CD8-positive, alpha-beta memory T cell (primary cell): ENCODE measurements at regions of chr5 and their contacts with region 1.

Region 1: DNA sequence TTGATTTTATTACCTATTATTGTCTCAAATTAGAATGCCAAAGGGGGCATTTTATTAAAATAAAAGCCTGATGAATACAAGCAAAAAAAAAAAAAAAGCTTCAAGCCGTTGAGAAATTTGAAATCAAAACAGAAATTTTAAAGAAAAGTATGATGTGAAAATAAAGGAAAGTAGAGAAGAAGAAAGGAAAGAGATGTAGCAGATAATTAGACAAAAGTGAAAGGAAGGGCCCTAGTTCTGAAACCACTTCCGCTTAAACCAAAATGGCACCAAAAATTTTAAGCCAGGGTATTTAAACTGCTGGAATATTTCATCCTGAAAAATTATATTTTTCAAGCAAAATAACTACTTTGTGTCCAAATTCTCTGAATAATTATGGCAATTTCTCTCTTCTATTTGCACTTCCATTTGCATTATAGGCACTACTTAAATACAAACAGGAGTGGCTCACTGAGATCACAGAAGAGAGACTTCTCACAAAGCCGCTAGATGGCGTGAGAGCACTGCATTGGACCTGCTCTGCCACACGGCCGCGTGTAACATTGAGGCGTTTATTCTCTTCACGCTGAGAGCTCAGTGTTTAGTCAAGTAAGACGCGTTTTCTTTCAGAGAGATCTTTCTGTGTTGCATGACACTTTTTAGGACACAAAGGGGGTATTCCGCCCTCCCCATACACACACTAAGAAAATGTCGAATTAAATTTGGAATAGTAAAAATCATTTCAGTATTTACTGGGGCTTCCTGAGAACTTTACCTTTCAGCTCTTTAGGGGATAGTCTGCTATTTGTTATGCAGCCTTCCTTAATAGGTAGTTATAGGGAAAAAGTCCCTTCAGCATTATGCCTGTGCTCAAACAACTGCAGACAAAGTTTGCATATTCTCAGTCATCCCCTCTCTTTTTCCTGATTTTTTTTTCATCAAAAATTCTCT is 368.4 kb upstream of the CCNH start:
- DNase-seq: peak; percentile 62 to 83 (median 66)
- H3K4me3 ChIP-seq: no peak overlapping the region
- H3K4me3 Mint-ChIP-seq: no peak overlapping the region
- H3K27ac ChIP-seq: no peak overlapping the region
- H3K27ac Mint-ChIP-seq: no peak overlapping the region
- H3K4me1 ChIP-seq: no peaks in the 10 kb centered on the region
- H3K4me1 Mint-ChIP-seq: peaks cover 2 to 4% (median 3%) of the 10 kb centered on the region in 3 donors
- H3K27me3 ChIP-seq: peaks cover 6% of the 10 kb centered on the region
- H3K27me3 Mint-ChIP-seq: peaks cover 11 to 41% of the 10 kb centered on the region in 2 donors

Region 2: DNA sequence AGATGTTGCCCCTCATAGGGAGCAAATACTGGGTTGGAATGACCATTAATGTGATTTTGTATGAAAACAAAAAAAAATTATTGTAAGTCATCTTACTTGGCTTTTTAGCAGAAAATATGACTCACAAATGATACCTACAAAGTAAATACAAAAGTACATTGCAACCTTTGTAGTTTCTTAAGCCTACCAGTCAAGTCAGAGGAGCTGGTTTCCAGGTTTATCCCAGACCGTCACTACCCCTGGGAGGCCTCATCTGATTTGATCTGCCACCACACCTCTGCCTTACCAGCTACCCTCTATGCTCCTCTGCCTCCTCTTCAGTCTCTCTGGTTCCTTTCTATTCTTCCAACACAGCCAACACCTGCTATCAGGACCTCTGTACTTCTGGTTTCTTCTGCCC is 18.5 kb before region 1 on chr5:
- CTCF ChIA-PET with region 1: no interaction called
- POLR2A ChIA-PET with region 1: no interaction called
- DNase-seq: no peak
- H3K4me3 ChIP-seq: no peak overlapping the region
- H3K4me3 Mint-ChIP-seq: no peak overlapping the region
- H3K27ac ChIP-seq: no peak overlapping the region
- H3K27ac Mint-ChIP-seq: no peak overlapping the region
- H3K4me1 ChIP-seq: no peaks in the 10 kb centered on the region
- H3K4me1 Mint-ChIP-seq: no peaks in the 10 kb centered on the region
- H3K27me3 ChIP-seq: no peaks in the 10 kb centered on the region
- H3K27me3 Mint-ChIP-seq: peaks cover 2 to 6% of the 10 kb centered on the region in 2 donors

Region 3: DNA sequence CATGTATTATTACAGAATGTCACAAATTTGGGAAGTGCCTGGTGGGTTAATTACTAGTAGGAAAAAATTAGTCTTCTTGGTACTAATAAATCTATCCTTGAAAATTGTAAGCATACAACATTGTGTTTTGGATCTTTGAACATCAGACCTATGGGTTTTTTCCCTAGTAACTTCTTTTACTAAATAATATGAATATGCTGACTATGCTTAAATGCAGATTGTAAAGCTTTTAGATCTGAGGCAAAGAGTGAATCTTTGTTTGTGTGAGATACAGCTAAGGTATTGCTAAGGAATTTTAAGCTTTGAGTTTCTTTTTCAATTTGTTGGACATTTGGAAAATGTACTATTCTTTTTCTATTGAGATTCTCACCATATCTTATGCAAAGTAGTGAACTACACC is 22.3 kb after region 1 on chr5:
- CTCF ChIA-PET with region 1: no interaction called
- POLR2A ChIA-PET with region 1: no interaction called
- DNase-seq: no peak
- H3K4me3 ChIP-seq: no peak overlapping the region
- H3K4me3 Mint-ChIP-seq: no peak overlapping the region
- H3K27ac ChIP-seq: no peak overlapping the region
- H3K27ac Mint-ChIP-seq: no peak overlapping the region
- H3K4me1 ChIP-seq: no peaks in the 10 kb centered on the region
- H3K4me1 Mint-ChIP-seq: no peaks in the 10 kb centered on the region
- H3K27me3 ChIP-seq: no peaks in the 10 kb centered on the region
- H3K27me3 Mint-ChIP-seq: peaks cover 3 to 19% of the 10 kb centered on the region in 2 donors

Region 4: GRCh38 chr5:88690409-88691229 is 909.5 kb after region 1 on chr5:
- CTCF ChIA-PET with region 1: interaction called, 72 read pairs
- POLR2A ChIA-PET with region 1: no interaction called
- DNase-seq: peak; percentile 43 to 75 (median 56)
- H3K4me3 ChIP-seq: no peak overlapping the region
- H3K4me3 Mint-ChIP-seq: peak overlapping the region; percentile 40 to 81 (median 75)
- H3K27ac ChIP-seq: no peak overlapping the region
- H3K27ac Mint-ChIP-seq: peak overlapping the region in 6 of 8 donors; percentile 10 to 83 (median 59)
- H3K4me1 ChIP-seq: peaks cover 16% of the 10 kb centered on the region
- H3K4me1 Mint-ChIP-seq: peaks cover 13 to 24% (median 21%) of the 10 kb centered on the region in 3 donors
- H3K27me3 ChIP-seq: peaks cover 90% of the 10 kb centered on the region
- H3K27me3 Mint-ChIP-seq: peaks cover 85 to 95% of the 10 kb centered on the region in 2 donors